Left cardiac atrium (tissue), 4 donors: ENCODE measurements at regions of chr5 and their contacts with region 1.

Region 1: DNA sequence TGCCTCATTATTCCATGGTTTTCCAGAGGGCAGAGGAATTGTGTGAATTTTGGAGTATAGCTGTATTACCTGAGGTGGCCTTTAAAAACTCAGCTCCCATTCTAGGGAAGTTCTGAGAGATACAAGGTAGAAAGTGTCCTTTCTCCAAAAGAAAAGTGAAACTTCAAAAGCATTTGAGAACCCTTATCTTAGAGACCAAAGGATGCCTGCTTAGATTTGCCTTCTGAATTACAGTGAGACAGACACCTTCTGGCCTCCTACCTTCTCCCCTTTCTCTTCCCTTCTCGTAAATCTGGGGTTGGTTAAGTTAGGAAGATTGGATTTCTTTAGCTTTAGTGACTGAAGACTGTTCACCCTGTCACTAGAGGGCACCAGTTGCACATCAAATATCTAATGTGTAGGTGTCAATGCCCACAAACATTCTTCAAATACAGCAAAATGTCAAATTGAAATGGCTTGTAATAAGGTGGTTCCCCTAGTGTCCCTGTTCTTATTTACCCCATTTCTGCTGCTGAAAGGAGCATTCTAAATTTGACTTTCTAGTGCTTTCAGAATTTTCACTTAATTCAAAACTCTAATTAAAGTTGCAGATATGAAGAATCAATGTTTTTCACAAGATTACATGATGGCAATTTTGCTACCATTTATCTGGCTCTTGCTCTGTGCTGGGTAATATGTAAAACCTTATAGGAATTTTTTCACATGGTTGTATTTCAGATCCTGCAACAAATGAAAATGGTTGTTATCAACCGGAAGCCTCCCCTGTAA is 46.7 kb downstream of the PRRC1 start:
- DNase-seq: no peak
- ATAC-seq: peak; percentile 47 to 75

Region 2: DNA sequence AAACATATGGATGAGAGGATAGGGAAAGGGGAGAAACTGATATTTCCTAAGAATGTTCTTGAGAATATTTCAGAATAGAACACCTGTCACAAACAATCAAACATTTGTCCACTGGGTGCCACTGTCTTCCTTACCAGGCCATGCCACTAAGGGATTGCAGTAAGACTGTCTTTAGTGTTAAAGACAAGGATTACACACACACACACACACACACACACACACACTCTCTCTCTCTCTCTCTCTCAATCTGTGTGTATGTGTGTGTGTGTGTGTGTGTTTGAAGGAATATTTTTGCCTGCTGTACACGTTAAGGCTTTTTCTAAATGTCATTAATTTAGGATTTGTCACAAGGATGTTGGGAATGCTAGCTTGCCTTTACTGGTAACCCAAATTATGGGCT is 193.4 kb after region 1 on chr5:
- intact Hi-C with region 1: loop called in 1 of 2 experiments (anchors 10 kb)
- DNase-seq: peak; percentile 23
- ATAC-seq: peak in 1 of 2 donors; percentile 51